ENCODE measurements at regions of chr17 and their contacts with region 1.

Region 1: GRCh38 chr17:5584383-5585286 is at the start of gene NLRP1:
- DNase-seq: peak; percentile 89
- H3K4me3 ChIP-seq: peak within 1 kb of the TSS; percentile 0 to 54 (median 35)
- H3K27ac ChIP-seq: peak within 1 kb of the TSS; percentile 80 to 84 (median 82)
- H3K4me1 ChIP-seq: peaks cover 6 to 28% (median 7%) of the 10 kb centered on the region in 4 donors
- H3K27me3 ChIP-seq: no peaks in the 10 kb centered on the region
- CTCF ChIP-seq: no peak
- EP300 ChIP-seq: no peak
- POLR2A ChIP-seq: peak; percentile 79
- total RNA-seq, gene NLRP1: 7.6 to 21.8 (median 13.7) TPM

Region 2: DNA sequence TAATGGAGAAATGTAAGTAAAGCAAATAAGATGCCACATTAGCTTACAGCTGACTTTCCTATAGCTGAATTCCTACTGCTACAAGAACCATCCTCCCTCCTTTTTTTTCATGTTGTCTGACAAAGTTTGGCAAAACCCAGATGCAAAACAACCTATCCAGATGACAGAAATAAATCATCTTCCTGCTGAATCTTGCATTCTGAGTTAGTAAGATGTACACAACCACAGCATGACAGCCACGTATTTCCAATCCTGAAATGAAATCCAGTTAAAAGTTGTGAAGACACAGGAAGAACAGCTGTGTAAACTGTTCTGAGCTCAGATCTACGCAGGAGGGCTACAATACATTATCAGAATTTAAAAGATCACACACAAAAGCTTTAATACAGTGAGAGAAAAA is 110.7 kb before region 1 on chr17:
- in situ Hi-C with region 1: no loop called
- intact Hi-C with region 1: no loop called
- DNase-seq: no peak
- H3K4me3 ChIP-seq: no peak overlapping the region
- H3K27ac ChIP-seq: no peak overlapping the region
- H3K4me1 ChIP-seq: peaks cover 0 to 5% (median 2%) of the 10 kb centered on the region in 4 donors
- H3K27me3 ChIP-seq: no peaks in the 10 kb centered on the region
- CTCF ChIP-seq: no peak
- EP300 ChIP-seq: no peak
- POLR2A ChIP-seq: no peak

Region 3: GRCh38 chr17:5706577-5707216 is 122.1 kb after region 1 on chr17:
- in situ Hi-C with region 1: loop called in 1 of 4 experiments (anchors 10 kb)
- intact Hi-C with region 1: no loop called
- DNase-seq: peak; percentile 63
- H3K4me3 ChIP-seq: no peak overlapping the region
- H3K27ac ChIP-seq: no peak overlapping the region
- H3K4me1 ChIP-seq: no peaks in the 10 kb centered on the region
- H3K27me3 ChIP-seq: peaks cover 8% of the 10 kb centered on the region
- CTCF ChIP-seq: peak; percentile 52 to 67 (median 65)
- EP300 ChIP-seq: no peak
- POLR2A ChIP-seq: no peak

Region 4: GRCh38 chr17:6279659-6280058 is 695.0 kb after region 1 on chr17:
- in situ Hi-C with region 1: loop called in 1 of 4 experiments (anchors 25 kb)
- intact Hi-C with region 1: no loop called
- DNase-seq: peak; percentile 71
- H3K4me3 ChIP-seq: no peak overlapping the region
- H3K27ac ChIP-seq: no peak overlapping the region
- H3K4me1 ChIP-seq: no peaks in the 10 kb centered on the region
- H3K27me3 ChIP-seq: no peaks in the 10 kb centered on the region
- CTCF ChIP-seq: peak; percentile 22 to 78 (median 37)
- EP300 ChIP-seq: no peak
- POLR2A ChIP-seq: no peak

Region 5: GRCh38 chr17:6421700-6422604 is 837.3 kb after region 1 on chr17:
- in situ Hi-C with region 1: loop called in 3 of 4 experiments (anchors 5 kb)
- intact Hi-C with region 1: loop called (anchors 2 kb)
- DNase-seq: peak; percentile 80
- H3K4me3 ChIP-seq: no peak overlapping the region
- H3K27ac ChIP-seq: no peak overlapping the region
- H3K4me1 ChIP-seq: no peaks in the 10 kb centered on the region
- H3K27me3 ChIP-seq: peaks cover 9% of the 10 kb centered on the region
- CTCF ChIP-seq: peak; percentile 68 to 87 (median 78)
- EP300 ChIP-seq: no peak
- POLR2A ChIP-seq: no peak

Region 6: DNA sequence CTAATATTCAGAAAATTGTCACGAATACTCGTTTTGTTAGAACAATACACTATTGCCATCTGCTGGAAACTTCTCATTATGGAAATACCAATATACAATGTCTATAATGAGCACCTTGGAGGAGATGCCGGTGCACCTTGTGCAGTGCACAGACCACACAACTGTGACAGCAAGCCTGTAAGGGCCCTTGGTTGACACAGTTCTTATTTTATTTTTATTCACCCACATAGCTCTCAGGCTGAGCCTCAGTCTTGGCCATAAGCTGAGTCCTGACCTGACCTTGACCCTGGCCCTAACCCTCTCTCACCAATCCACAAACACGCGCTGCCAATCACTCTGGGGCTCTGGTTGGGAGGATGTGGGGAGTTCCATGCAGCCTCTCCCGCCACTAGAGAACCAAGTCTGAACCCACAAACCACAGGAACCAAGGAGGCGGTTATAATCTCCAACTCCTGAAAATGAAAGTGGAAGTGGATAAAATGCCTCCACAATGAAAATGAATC is 842.7 kb after region 1 on chr17:
- in situ Hi-C with region 1: loop called (anchors 5 to 10 kb)
- intact Hi-C with region 1: no loop called
- DNase-seq: no peak
- H3K4me3 ChIP-seq: no peak overlapping the region
- H3K27ac ChIP-seq: no peak overlapping the region
- H3K4me1 ChIP-seq: peaks cover 0 to 7% (median 0%) of the 10 kb centered on the region in 4 donors
- H3K27me3 ChIP-seq: peaks cover 7% of the 10 kb centered on the region
- CTCF ChIP-seq: no peak
- EP300 ChIP-seq: no peak
- POLR2A ChIP-seq: no peak

Region 7: DNA sequence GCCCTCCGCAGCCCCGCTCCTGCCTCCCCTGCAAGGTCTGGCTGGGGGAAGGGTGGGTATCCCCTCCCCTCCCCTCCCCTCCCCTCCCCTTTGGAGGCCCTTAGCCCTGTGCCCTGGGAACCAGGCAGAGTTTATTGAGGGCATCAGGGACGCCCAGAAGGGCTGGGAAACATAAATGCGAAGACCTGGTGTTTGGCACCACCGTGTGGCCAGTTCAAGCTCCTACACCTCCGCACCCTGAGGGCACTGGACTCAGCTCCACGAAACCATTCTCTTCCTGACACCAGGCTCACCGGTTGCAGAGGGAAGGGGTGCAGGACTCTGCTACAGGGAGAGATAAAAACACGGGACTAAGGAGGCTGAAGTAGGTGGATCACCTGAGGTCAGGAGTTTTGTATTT is 851.3 kb after region 1 on chr17:
- in situ Hi-C with region 1: loop called in 1 of 4 experiments (anchors 10 kb)
- intact Hi-C with region 1: no loop called
- DNase-seq: peak; percentile 69
- H3K4me3 ChIP-seq: no peak overlapping the region
- H3K27ac ChIP-seq: no peak overlapping the region
- H3K4me1 ChIP-seq: no peaks in the 10 kb centered on the region
- H3K27me3 ChIP-seq: peaks cover 32% of the 10 kb centered on the region
- CTCF ChIP-seq: peak; percentile 68 to 87 (median 80)
- EP300 ChIP-seq: no peak
- POLR2A ChIP-seq: no peak